MCF 10A (cell line): ENCODE measurements at regions of chr12 and their contacts with region 1.

Region 1: DNA sequence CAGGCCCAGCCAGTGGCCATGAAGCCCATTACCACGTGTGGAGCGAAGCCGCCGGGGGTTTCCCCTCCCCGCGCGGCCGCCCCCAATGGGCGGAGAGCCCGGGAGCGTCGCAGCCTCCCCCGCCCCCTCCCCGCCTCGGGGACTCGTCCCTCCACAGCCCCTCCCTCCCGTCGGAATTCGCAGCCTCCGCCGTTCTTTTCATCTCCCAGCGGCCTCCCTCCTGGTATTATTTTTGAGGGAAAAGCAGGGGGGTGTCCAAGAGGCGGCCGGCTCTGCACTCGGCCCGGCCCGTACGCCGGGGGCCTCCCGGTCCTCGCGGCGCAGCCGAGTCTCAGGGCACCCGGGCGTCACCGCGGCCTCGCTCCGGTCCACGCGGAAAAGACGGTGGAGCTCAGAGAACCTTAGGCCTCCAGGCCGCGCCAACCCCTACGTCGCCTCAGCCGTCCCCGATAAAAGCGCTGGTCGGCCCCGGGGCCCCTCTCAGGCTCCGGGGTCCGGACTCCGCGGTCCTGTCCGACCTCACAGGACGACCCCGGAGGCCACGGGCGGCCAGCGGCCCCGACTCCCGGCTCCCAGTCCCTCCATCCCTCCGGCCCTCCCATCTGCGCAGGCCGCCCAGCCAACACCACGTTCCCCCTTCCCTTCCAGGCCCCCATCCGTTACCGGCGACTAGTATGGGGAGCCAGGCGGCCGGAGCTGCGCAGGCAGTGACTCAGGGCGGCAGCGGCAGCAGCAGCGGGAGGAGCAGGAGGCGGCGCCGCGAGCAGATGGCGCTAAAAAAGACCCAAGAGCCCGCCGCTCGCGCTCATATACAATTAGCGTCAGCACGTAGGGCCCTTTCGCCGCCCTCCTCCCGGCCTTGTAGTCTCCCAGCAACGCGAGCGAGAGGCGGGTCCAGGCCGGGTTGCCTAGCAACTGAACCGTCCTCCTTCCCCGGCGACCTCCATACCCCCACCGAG is at the start of gene NAP1L1:
- DNase-seq: peak; percentile 98
- H3K4me3 Mint-ChIP-seq: peak within 1 kb of the TSS; percentile 86
- H3K27ac Mint-ChIP-seq: peak within 1 kb of the TSS; percentile 86
- H3K4me1 Mint-ChIP-seq: peaks cover 20% of the 10 kb centered on the region
- H3K27me3 Mint-ChIP-seq: no peaks in the 10 kb centered on the region
- CTCF ChIP-seq: no peak
- total RNA-seq, gene NAP1L1: 327 and 493 TPM in 2 replicates

Region 2: GRCh38 chr12:74816398-74817168 is 1267.6 kb before region 1 on chr12:
- CTCF ChIA-PET with region 1: no interaction called
- POLR2A ChIA-PET with region 1: no interaction called
- intact Hi-C with region 1: no loop called
- DNase-seq: no peak
- H3K4me3 Mint-ChIP-seq: no peak overlapping the region
- H3K27ac Mint-ChIP-seq: no peak overlapping the region
- H3K4me1 Mint-ChIP-seq: no peaks in the 10 kb centered on the region
- H3K27me3 Mint-ChIP-seq: no peaks in the 10 kb centered on the region
- CTCF ChIP-seq: no peak

Region 3: DNA sequence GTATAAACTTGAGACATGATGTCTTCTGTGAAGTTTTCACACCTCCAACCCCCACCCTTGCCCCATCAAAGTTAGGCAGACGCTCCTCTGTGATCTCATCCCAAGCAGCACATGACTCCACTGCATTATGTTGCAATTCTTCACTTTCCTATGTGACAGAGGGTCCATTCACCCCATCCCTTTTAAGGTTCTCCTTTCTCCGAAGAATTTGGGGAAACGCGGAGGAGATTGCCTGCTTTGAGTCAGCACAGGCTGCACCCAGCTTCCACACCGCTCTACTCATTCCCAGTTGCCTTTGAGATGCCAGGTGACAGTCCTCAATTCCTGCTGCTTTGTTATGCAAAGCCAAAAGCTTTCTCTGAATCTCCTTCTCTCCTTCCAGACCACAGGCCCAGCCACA is 114.4 kb before region 1 on chr12:
- CTCF ChIA-PET with region 1: no interaction called
- POLR2A ChIA-PET with region 1: no interaction called
- intact Hi-C with region 1: no loop called
- DNase-seq: peak; percentile 47
- H3K4me3 Mint-ChIP-seq: no peak overlapping the region
- H3K27ac Mint-ChIP-seq: peak overlapping the region; percentile 44
- H3K4me1 Mint-ChIP-seq: peaks cover 15% of the 10 kb centered on the region
- H3K27me3 Mint-ChIP-seq: no peaks in the 10 kb centered on the region
- CTCF ChIP-seq: no peak

Region 4: DNA sequence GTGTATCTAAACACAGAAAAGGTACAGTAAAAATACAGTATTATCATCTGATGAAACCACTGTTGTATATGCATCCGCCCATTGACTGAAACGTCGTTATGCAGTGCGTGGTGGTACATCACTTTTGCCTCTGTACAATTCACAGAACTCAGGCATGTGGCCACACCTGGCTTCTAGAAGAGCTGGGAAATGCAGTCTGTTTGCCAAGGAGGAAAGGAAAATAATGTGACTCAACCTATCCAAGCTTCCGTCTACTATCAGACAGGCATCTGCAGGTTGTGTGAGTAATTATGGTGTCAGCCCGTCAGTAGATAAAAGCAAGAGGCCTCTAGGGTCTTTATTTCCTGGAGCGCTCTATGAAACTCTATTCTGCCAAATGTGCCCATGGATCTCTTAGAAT is 152.4 kb after region 1 on chr12:
- CTCF ChIA-PET with region 1: no interaction called
- POLR2A ChIA-PET with region 1: no interaction called
- intact Hi-C with region 1: loop called (anchors 5 kb)
- DNase-seq: peak; percentile 90
- H3K4me3 Mint-ChIP-seq: no peak overlapping the region
- H3K27ac Mint-ChIP-seq: peak overlapping the region; percentile 67
- H3K4me1 Mint-ChIP-seq: peaks cover 24% of the 10 kb centered on the region
- H3K27me3 Mint-ChIP-seq: no peaks in the 10 kb centered on the region
- CTCF ChIP-seq: no peak